Heart right ventricle (tissue), 16 donors: ENCODE measurements at regions of chr4 and their contacts with region 1.

Region 1: GRCh38 chr4:165131247-165131832 is 18.7 kb upstream of the TMEM192 start:
- DNase-seq: peak in 1 of 2 donors; percentile 60
- ATAC-seq: peak in 6 of 8 donors; percentile 61 to 77 (median 72)
- H3K4me3 ChIP-seq: no peak overlapping the region
- H3K27ac ChIP-seq: no peak overlapping the region
- H3K4me1 ChIP-seq: peaks cover 0 to 26% (median 0%) of the 10 kb centered on the region in 9 donors
- H3K27me3 ChIP-seq: peaks cover 0 to 14% (median 0%) of the 10 kb centered on the region in 7 donors
- CTCF ChIP-seq: peak; percentile 62 to 96 (median 90)

Region 2: GRCh38 chr4:165207431-165208220 is 76.3 kb after region 1 on chr4 and contains the start of gene KLHL2:
- intact Hi-C with region 1: loop called in 1 of 10 experiments (anchors 10 kb)
- DNase-seq: peak; percentile 82 to 85
- ATAC-seq: peak; percentile 95 to 98 (median 96)
- H3K4me3 ChIP-seq: peak within 1 kb of the TSS; percentile 46 to 91 (median 84)
- H3K27ac ChIP-seq: peak within 1 kb of the TSS; percentile 62 to 94 (median 86)
- H3K4me1 ChIP-seq: peaks cover 4 to 67% (median 24%) of the 10 kb centered on the region in 9 donors
- H3K27me3 ChIP-seq: no peaks in the 10 kb centered on the region
- CTCF ChIP-seq: peak in 1 of 9 donors; percentile 11
- total RNA-seq, gene KLHL2: 6.0 to 14.7 (median 10.9) TPM

Region 3: DNA sequence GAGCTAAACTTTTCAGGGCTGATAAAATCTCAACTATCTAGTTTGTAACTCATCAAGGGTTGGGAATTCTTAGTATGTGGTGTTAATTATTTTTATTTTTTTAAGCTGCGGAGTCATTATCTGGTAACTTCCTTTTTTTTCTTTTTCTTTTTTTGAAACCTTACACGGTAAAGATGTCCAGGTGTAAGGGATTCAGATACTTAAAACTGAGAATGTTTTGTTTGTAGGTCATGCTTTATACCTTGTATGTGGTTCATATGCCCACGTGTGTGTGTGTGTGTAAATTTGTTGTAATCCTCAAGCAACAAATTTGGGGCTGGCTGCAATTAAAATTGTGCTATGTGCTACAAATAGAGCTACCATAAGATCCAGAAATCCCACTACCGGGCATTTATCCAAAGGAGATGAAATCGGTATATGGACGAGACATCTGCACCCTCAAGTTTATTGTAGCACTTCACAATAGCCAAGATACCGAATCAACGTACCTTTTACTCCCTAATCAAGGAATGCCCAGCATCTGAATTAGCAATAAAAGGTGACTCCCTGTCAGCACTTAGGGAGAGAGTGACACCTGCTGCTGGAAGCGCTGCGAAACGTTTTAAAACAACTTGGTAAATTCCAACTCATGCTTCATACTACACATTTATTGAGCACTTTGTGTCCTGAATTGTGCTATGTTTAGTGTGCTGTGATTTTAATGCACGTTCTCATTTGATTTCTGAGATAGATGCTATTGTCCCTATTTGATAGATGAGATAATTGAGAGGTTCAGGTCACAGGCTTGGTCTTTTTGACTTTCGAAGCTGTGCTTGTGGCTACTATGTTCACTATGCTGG is 212.2 kb after region 1 on chr4:
- intact Hi-C with region 1: loop called in 8 of 10 experiments (anchors 1 to 10 kb)
- DNase-seq: no peak
- ATAC-seq: no peak
- H3K4me3 ChIP-seq: no peak overlapping the region
- H3K27ac ChIP-seq: no peak overlapping the region
- H3K4me1 ChIP-seq: no peaks in the 10 kb centered on the region
- H3K27me3 ChIP-seq: no peaks in the 10 kb centered on the region
- CTCF ChIP-seq: peak in 5 of 9 donors; percentile 25 to 55 (median 35)

Region 4: DNA sequence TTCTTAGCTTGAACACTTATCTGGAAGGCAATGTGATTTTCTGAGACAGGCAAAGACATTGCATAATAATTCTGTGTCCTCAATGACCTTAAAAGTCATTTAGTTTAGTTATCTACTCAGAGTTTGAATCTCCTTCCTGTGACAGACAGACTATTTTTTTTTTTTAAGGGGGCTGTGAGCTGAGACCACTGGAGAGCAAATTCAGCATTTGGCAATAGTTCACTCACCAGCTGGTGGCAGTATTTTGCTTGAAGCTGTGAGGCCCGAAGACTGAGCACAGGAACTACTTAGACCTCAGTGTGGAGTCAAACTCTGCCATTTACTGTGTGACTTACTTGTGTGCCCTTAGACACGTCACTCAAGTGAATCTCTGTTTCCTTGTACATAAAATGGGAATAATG is 224.6 kb after region 1 on chr4:
- intact Hi-C with region 1: loop called in 1 of 10 experiments (anchors 10 kb)
- DNase-seq: peak in 1 of 2 donors; percentile 8
- ATAC-seq: peak in 1 of 8 donors; percentile 67
- H3K4me3 ChIP-seq: no peak overlapping the region
- H3K27ac ChIP-seq: no peak overlapping the region
- H3K4me1 ChIP-seq: peaks cover 0 to 32% (median 0%) of the 10 kb centered on the region in 9 donors
- H3K27me3 ChIP-seq: peaks cover 0 to 21% (median 4%) of the 10 kb centered on the region in 7 donors
- CTCF ChIP-seq: peak in 8 of 9 donors; percentile 7 to 58 (median 44)